ENCODE measurements at regions of chr1 and their contacts with region 1.

Region 1: DNA sequence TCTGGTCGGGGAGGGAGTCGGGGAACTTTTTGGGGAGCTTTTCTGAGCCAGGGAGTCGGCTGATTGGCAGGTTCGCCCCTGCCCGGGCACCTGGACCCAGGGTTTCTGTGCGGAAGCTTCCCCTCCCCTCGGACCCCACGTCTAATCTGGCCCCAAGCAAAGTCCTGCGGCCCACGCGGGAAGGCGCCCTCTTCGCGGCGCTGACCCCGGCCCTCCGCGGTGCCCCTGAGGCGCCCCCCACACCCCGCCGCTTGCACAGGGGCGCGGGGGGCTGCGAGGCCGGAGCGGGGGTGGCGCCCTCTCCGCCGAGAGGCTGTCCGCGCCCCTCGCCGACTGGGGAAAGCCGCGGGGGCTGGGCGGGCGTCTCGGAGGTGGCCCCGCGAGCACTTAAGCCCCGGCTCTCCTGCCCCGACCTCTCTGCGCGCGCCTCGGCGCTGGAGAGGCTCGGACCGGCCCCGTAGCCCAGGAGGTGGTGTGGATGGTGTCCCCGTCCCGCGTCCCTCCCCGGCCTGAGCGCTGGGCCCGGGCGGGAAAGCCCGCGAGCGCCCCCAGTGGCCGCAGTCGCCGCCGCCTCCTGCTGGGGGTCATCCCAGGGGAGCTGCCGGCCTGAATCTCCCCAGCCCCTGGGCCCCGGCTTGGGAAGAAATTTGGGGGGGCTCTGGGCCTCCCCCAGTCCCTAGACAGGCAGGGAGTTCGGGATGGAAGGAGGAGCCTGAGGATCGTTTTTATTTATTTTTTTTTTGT is 1.7 kb upstream of the HES4 start:
- DNase-seq: peak; percentile 83 to 87
- ATAC-seq: peak; percentile 32 to 61 (median 51)
- H3K4me3 ChIP-seq: peak overlapping the region; percentile 9 to 94 (median 76)
- H3K27ac ChIP-seq: peak overlapping the region; percentile 96 to 100 (median 100)
- H3K4me1 ChIP-seq: peaks cover 14 to 70% (median 39%) of the 10 kb centered on the region in 9 donors
- H3K27me3 ChIP-seq: peaks cover 0 to 93% (median 0%) of the 10 kb centered on the region in 7 donors
- CTCF ChIP-seq: peak; percentile 98 to 100 (median 98)

Region 2: GRCh38 chr1:923131-923990 is 78.3 kb before region 1 on chr1 and contains the start of gene SAMD11:
- intact Hi-C with region 1: no loop called
- DNase-seq: peak; percentile 86 to 87
- ATAC-seq: peak; percentile 35 to 73 (median 61)
- H3K4me3 ChIP-seq: peak within 1 kb of the TSS; percentile 25 to 63 (median 52)
- H3K27ac ChIP-seq: peak within 1 kb of the TSS in 2 of 10 donors; percentile 15 to 44
- H3K4me1 ChIP-seq: peaks cover 19 to 52% (median 32%) of the 10 kb centered on the region in 9 donors
- H3K27me3 ChIP-seq: peaks cover 23 to 97% (median 87%) of the 10 kb centered on the region in 7 donors
- CTCF ChIP-seq: no peak
- total RNA-seq, gene SAMD11: 0.87 to 2.2 (median 1.2) TPM

Region 3: GRCh38 chr1:941588-942383 is 59.8 kb before region 1 on chr1:
- intact Hi-C with region 1: no loop called
- DNase-seq: peak; percentile 67 to 71
- ATAC-seq: peak in 7 of 8 donors; percentile 25 to 51 (median 45)
- H3K4me3 ChIP-seq: peak overlapping the region; percentile 4 to 51 (median 46)
- H3K27ac ChIP-seq: peak overlapping the region in 7 of 10 donors; percentile 45 to 87 (median 69)
- H3K4me1 ChIP-seq: peaks cover 3 to 55% (median 33%) of the 10 kb centered on the region in 9 donors
- H3K27me3 ChIP-seq: peaks cover 11 to 69% (median 58%) of the 10 kb centered on the region in 7 donors
- CTCF ChIP-seq: no peak

Region 4: DNA sequence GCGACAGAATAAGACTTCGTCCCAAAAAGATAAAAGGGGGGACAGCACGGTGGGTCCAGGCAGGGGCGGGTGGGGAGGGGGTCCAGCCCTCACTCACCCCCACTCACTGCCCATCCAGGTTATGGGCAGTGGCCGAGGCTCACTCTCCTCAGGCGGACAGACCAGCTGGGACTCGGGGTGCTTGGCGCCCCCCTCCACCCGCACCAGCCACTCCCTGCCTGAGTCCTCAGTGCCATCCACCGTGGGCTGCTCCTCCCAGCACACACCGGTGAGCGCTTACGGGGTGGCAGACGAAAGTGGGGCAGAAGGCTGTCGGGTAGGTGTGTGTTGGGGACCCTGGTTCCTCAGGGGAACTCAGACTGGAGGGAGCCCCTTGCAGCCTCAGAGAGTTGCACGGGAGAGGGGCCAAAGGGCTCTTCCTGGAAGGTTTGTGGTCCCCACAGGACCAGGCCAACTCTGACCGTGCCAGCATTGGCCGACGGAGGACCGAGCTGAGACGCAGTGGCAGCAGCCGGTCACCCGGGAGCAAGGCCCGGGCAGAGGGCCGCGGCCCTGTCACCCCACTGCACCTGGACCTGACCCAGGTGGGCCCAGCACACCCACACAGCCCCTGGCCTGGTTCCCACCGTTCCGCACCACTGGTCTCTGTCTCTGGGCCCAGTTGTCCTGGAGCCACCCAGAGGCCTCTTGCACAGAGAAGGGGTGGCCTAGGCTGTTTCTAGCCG is 28.7 kb before region 1 on chr1:
- intact Hi-C with region 1: loop called in 1 of 10 experiments (anchors 1 kb)
- DNase-seq: peak in 1 of 2 donors; percentile 39
- ATAC-seq: peak; percentile 11 to 27 (median 20)
- H3K4me3 ChIP-seq: no peak overlapping the region
- H3K27ac ChIP-seq: peak overlapping the region in 5 of 10 donors; percentile 4 to 50 (median 39)
- H3K4me1 ChIP-seq: peaks cover 0 to 35% (median 7%) of the 10 kb centered on the region in 9 donors
- H3K27me3 ChIP-seq: peaks cover 14 to 84% (median 69%) of the 10 kb centered on the region in 7 donors
- CTCF ChIP-seq: no peak

Measured in heart right ventricle (tissue), 16 donors.